ENCODE measurements at regions of chr11 and their contacts with region 1.

Region 1: GRCh38 chr11:119121008-119121810 is at the start of gene HINFP:
- DNase-seq: peak; percentile 99
- H3K4me3 ChIP-seq: peak within 1 kb of the TSS; percentile 85 to 99 (median 94)
- H3K27ac ChIP-seq: peak within 1 kb of the TSS; percentile 59 to 90
- H3K4me1 ChIP-seq: peaks cover 11 to 20% (median 19%) of the 10 kb centered on the region in 4 experiments
- H3K27me3 ChIP-seq: no peaks in the 10 kb centered on the region

Region 2: GRCh38 chr11:119106564-119107537 is 14.4 kb before region 1 on chr11 and contains the start of gene C2CD2L:
- CTCF ChIA-PET with region 1: interaction called, 45 read pairs
- POLR2A ChIA-PET with region 1: interaction called, 3 read pairs
- DNase-seq: peak; percentile 85 to 89 (median 85)
- H3K4me3 ChIP-seq: peak within 1 kb of the TSS; percentile 70 to 90 (median 79)
- H3K27ac ChIP-seq: peak within 1 kb of the TSS in 1 of 2 experiments; percentile 71
- H3K4me1 ChIP-seq: peaks cover 13 to 42% (median 32%) of the 10 kb centered on the region in 4 experiments
- H3K27me3 ChIP-seq: no peaks in the 10 kb centered on the region

Region 3: GRCh38 chr11:119155733-119156492 is 34.7 kb after region 1 on chr11:
- CTCF ChIA-PET with region 1: no interaction called
- POLR2A ChIA-PET with region 1: no interaction called
- DNase-seq: peak in 2 of 3 donors; percentile 26 to 36
- H3K4me3 ChIP-seq: no peak overlapping the region
- H3K27ac ChIP-seq: no peak overlapping the region
- H3K4me1 ChIP-seq: no peaks in the 10 kb centered on the region
- H3K27me3 ChIP-seq: peaks cover 0 to 13% (median 5%) of the 10 kb centered on the region in 5 experiments

Region 4: GRCh38 chr11:119249671-119250010 is 128.4 kb after region 1 on chr11:
- CTCF ChIA-PET with region 1: no interaction called
- POLR2A ChIA-PET with region 1: no interaction called
- DNase-seq: no peak
- H3K4me3 ChIP-seq: no peak overlapping the region
- H3K27ac ChIP-seq: no peak overlapping the region
- H3K4me1 ChIP-seq: no peaks in the 10 kb centered on the region
- H3K27me3 ChIP-seq: no peaks in the 10 kb centered on the region